Spleen (tissue), 13 donors: ENCODE measurements at regions of chr19 and their contacts with region 1.

Region 1: DNA sequence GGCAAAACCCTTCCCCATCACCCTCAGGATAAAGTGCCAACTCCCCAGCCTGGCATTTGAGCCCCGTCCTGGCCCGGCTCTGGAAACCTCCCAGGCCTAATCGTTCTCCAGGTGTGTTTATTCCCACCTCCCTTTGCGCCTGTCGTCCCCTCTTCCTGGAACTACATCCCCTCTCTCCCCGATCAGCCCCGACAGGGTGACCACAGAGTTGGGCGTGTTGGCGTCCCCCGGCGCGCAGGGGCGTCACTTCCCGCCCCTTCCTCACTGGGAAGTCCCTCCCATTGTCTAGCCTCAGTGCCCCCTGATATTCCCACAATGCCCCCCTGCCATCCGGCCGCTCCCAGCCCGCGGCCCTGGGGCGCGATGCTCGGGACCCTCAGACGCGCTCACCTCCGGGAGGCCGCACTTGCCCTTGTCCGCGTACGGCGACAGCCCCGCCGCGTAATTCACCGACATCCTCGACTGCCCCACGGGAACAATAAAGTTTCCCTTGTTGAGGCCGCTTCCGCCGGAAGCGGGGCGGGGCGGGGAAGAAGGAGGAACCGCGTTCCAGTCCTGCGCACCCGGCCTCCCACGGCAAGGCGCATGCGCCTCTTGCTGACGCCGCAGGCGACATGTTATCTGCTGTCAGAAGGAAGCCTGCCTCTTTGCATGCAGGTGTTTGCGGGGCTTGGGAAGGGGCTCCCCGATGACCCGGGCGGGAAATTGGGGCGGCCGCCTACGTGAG is at the starts of genes ANKRD24 and SIRT6:
- DNase-seq: peak; percentile 99
- H3K4me3 ChIP-seq: peak within 1 kb of the TSS; percentile 62 to 96 (median 80)
- H3K27ac ChIP-seq: peak within 1 kb of the TSS; percentile 67 to 94 (median 87)
- H3K4me1 ChIP-seq: peaks cover 19 to 45% (median 31%) of the 10 kb centered on the region in 6 donors
- H3K27me3 ChIP-seq: peaks cover 0 to 5% (median 0%) of the 10 kb centered on the region in 7 donors
- CTCF ChIP-seq: peak in 2 of 11 experiments; percentile 20 to 26
- POLR2A ChIP-seq: peak in 1 of 3 donors; percentile 22
- total RNA-seq, gene ANKRD24: 0.67 to 2.2 (median 0.97) TPM
- total RNA-seq, gene SIRT6: 15.9 to 39.8 (median 27.7) TPM

Region 2: DNA sequence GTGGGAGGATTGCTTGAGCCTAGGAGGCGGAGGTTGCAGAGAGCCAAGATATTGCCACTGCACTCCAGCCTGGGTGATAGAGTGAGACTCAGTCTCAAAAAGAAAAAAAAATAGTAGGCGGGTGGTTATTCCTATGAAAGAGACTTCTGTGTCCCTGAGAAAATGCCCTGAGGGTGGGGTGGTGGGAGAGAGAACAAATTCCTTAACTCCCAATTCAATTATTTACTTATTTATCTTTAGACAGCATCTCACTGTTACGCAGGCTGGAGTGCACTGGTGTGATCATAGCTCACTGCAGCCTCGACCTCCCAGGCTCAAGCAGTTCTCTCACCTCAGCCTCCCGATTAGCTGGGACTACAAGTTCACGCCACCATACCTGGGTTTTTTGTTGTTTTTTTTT is 186.6 kb before region 1 on chr19:
- intact Hi-C with region 1: loop called (anchors 10 kb)
- DNase-seq: no peak
- H3K4me3 ChIP-seq: no peak overlapping the region
- H3K27ac ChIP-seq: no peak overlapping the region
- H3K4me1 ChIP-seq: peaks cover 0 to 7% (median 3%) of the 10 kb centered on the region in 6 donors
- H3K27me3 ChIP-seq: no peaks in the 10 kb centered on the region
- CTCF ChIP-seq: no peak
- POLR2A ChIP-seq: no peak

Region 3: GRCh38 chr19:4124638-4125037 is 57.6 kb before region 1 on chr19:
- intact Hi-C with region 1: loop called (anchors 5 kb)
- DNase-seq: no peak
- H3K4me3 ChIP-seq: peak overlapping the region in 5 of 8 donors; percentile 60 to 87 (median 70)
- H3K27ac ChIP-seq: peak overlapping the region in 7 of 8 donors; percentile 65 to 92 (median 83)
- H3K4me1 ChIP-seq: peaks cover 7 to 45% (median 28%) of the 10 kb centered on the region in 6 donors
- H3K27me3 ChIP-seq: no peaks in the 10 kb centered on the region
- CTCF ChIP-seq: no peak
- POLR2A ChIP-seq: no peak

Region 4: GRCh38 chr19:4246767-4247593 is 64.7 kb after region 1 on chr19 and contains the start of gene YJU2:
- intact Hi-C with region 1: no loop called
- DNase-seq: peak; percentile 98
- H3K4me3 ChIP-seq: peak within 1 kb of the TSS; percentile 37 to 77 (median 58)
- H3K27ac ChIP-seq: peak within 1 kb of the TSS; percentile 94 to 99 (median 96)
- H3K4me1 ChIP-seq: peaks cover 0 to 22% (median 18%) of the 10 kb centered on the region in 6 donors
- H3K27me3 ChIP-seq: no peaks in the 10 kb centered on the region
- CTCF ChIP-seq: peak in 9 of 11 experiments; percentile 12 to 59 (median 47)
- POLR2A ChIP-seq: peak in 1 of 3 donors; percentile 82
- total RNA-seq, gene YJU2: 17.4 to 23.3 (median 21.2) TPM